Activated naive CD8-positive, alpha-beta T cell treated with anti-CD3 and anti-CD28 coated beads, Interleukin-2, amount 10 ng/mL, durations not matched to agents 7 days and 5 days (primary cell): ENCODE measurements at regions of chr12 and their contacts with region 1.

Region 1: GRCh38 chr12:14384783-14385638 is 19.5 kb downstream of the ATF7IP start:
- DNase-seq: no peak
- ATAC-seq: peak; percentile 96
- H3K4me3 Mint-ChIP-seq: peak overlapping the region; percentile 85
- H3K27ac Mint-ChIP-seq: peak overlapping the region; percentile 94
- H3K4me1 Mint-ChIP-seq: peaks cover 44% of the 10 kb centered on the region
- H3K27me3 Mint-ChIP-seq: no peaks in the 10 kb centered on the region

Region 2: GRCh38 chr12:14257734-14258574 is 127.1 kb before region 1 on chr12:
- POLR2A ChIA-PET with region 1: interaction called, 15 read pairs
- DNase-seq: peak; percentile 74
- ATAC-seq: peak; percentile 82
- H3K4me3 Mint-ChIP-seq: peak overlapping the region; percentile 74
- H3K27ac Mint-ChIP-seq: peak overlapping the region; percentile 97
- H3K4me1 Mint-ChIP-seq: peaks cover 37% of the 10 kb centered on the region
- H3K27me3 Mint-ChIP-seq: no peaks in the 10 kb centered on the region

Region 3: DNA sequence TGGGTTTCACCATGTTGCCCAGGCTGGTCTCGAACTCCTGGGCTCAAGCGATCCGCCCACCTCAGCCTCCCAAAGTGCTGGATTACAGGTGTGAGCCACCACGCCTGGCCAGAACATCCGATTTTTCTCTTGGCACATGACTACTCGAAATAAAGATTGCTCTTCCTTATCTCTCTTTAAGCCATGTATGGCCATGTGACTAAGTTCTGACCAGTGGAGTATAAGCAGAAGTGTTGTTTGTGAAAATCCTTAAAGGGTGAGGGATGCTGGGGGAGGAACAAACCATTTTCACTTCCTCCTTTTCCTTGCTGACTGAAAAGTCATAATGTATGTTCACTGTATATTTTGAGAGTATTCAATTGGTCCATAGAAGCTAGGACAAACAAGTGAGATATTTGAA is 70.2 kb before region 1 on chr12:
- POLR2A ChIA-PET with region 1: no interaction called
- DNase-seq: no peak
- ATAC-seq: no peak
- H3K4me3 Mint-ChIP-seq: no peak overlapping the region
- H3K27ac Mint-ChIP-seq: no peak overlapping the region
- H3K4me1 Mint-ChIP-seq: no peaks in the 10 kb centered on the region
- H3K27me3 Mint-ChIP-seq: no peaks in the 10 kb centered on the region

Region 4: GRCh38 chr12:14403711-14404196 is 18.7 kb after region 1 on chr12:
- POLR2A ChIA-PET with region 1: interaction called, 12 read pairs
- DNase-seq: no peak
- ATAC-seq: peak; percentile 35
- H3K4me3 Mint-ChIP-seq: peak overlapping the region; percentile 40
- H3K27ac Mint-ChIP-seq: peak overlapping the region; percentile 57
- H3K4me1 Mint-ChIP-seq: peaks cover 55% of the 10 kb centered on the region
- H3K27me3 Mint-ChIP-seq: no peaks in the 10 kb centered on the region

Region 5: DNA sequence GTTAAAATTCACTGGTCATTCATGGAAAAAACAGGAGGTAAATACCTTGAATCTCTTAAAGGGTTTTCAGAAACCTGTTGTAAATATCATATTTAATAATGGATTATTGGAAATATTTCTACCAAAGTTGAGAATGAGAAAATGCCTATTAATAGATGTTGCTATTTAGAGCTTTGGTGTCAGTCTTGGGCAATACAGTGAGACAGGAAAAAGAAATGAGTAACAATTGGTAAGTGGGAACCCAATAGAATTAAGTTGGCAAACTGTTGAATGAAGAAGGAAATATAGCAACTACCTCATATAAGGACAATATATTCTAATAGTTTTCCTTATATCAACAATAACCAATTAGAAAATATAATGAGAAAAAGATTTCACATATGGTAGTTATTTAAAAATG is 58.5 kb after region 1 on chr12:
- POLR2A ChIA-PET with region 1: no interaction called
- DNase-seq: no peak
- ATAC-seq: no peak
- H3K4me3 Mint-ChIP-seq: no peak overlapping the region
- H3K27ac Mint-ChIP-seq: no peak overlapping the region
- H3K4me1 Mint-ChIP-seq: peaks cover 5% of the 10 kb centered on the region
- H3K27me3 Mint-ChIP-seq: no peaks in the 10 kb centered on the region

Region 6: DNA sequence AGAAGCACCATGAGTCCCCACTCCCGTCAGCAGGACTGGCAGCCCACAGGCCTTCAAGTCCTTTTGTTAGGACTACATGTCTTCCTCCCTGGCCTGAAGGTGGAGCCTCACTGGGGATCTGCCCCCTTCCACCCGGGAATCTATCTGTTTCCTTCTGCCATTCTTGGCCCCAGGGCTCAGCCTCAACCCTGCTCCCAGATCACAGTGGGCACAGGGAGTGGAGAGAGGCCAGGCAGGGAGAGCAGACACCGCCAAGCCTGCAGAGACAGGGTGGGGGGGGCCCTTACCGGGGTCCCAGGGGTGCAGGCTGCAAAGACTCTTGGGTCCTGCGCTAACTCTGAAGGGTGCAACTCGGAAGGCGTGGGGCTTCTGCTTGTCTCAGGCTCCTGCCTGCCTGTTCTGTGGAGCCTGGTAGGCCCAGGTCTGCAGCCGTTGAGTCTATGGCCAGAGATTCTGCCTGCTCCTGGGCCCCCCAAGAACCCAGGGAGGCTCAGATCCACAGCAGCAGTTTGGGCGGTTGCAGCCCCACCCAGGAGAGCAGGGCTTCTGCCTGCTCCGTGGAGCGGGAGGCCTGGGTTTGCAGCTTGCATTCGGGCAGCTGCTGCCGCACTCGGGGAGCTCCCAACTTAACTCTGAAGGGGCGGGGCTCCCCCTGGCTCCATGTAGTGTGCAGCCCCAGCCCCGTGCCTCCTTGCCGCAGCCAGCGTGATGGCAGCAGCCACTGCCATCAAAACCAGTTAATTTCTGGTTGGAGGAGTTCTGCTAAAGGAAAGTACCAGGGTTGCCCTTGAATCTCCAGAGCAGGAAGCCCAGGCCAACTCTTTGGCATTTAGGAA is 204.4 kb after region 1 on chr12:
- POLR2A ChIA-PET with region 1: no interaction called
- DNase-seq: no peak
- ATAC-seq: no peak
- H3K4me3 Mint-ChIP-seq: no peak overlapping the region
- H3K27ac Mint-ChIP-seq: no peak overlapping the region
- H3K4me1 Mint-ChIP-seq: no peaks in the 10 kb centered on the region
- H3K27me3 Mint-ChIP-seq: no peaks in the 10 kb centered on the region